H1 (cell line): ENCODE measurements at regions of chr7 and their contacts with region 1.

Region 1: GRCh38 chr7:100632951-100633717 is 8.2 kb downstream of the TFR2 start:
- DNase-seq: peak in 1 of 2 experiments; percentile 84
- H3K4me3 ChIP-seq: peak overlapping the region; percentile 60 to 89 (median 61)
- H3K27ac ChIP-seq: no peak overlapping the region
- H3K4me1 ChIP-seq: peaks cover 0 to 3% (median 3%) of the 10 kb centered on the region in 4 experiments; a peak in 5 of 7 replicates
- H3K27me3 ChIP-seq: peaks cover 0 to 16% (median 9%) of the 10 kb centered on the region in 4 experiments; a peak in 5 of 7 replicates
- CTCF ChIP-seq: peak; percentile 45 to 71 (median 63)
- EP300 ChIP-seq: no peak
- POLR2A ChIP-seq: no peak
- RAD21 ChIP-seq: peak; percentile 22 to 32; a peak in 2 of 4 replicates

Region 2: DNA sequence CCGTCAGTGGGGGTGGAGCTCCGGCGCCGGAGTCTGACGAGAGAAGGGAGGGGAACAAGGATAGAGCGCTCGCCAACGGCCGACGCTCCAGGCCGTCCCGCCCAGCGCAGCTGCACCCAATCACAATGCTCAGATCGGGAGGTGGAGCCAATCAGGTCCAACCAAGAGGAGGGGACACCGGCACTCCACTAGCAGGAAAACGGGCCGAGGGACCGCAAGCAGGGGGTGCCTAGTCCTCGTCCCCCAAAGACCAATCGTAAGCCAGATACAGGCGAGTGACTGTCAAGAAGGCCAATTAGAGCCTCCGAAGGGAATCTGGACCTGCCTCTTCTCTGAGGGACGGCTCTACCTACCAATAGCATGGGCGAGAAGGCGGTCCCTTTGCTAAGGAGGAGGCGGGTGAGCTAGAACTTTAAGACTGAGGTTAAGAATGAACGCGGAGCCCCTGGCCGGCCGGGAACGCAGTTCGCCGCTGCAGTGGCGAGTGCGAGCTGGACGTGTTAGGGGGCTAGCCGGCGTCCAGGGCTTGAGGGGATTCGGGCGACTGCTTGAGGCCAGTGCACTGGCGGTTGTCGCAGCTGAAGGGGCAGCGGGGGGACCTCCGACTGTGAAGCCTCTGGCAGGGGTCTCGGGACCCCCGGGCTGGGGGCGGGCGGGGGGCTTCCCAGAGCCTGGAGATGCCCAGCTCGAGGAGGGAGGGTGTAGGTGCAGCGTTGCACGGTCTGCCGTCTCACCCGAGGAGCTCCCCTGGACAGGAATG is 46.7 kb before region 1 on chr7 and contains the start of gene FBXO24:
- CTCF ChIA-PET with region 1: interaction called, 23 read pairs
- POLR2A ChIA-PET with region 1: interaction called, 11 read pairs
- DNase-seq: peak; percentile 99 to 100
- H3K4me3 ChIP-seq: peak within 1 kb of the TSS; percentile 80 to 88 (median 80)
- H3K27ac ChIP-seq: peak within 1 kb of the TSS; percentile 86
- H3K4me1 ChIP-seq: peaks cover 0 to 36% (median 20%) of the 10 kb centered on the region in 4 experiments; a peak in 6 of 7 replicates
- H3K27me3 ChIP-seq: peaks cover 0 to 2% (median under 1%) of the 10 kb centered on the region in 4 experiments; a peak in 3 of 7 replicates
- CTCF ChIP-seq: 0 out of 4 replicates have a peak, but pooled peaks of 1 of the 3 experiments have one; percentile 0
- EP300 ChIP-seq: no peak
- POLR2A ChIP-seq: peak in 1 of 2 experiments; percentile 47; a peak in 2 of 3 replicates
- RAD21 ChIP-seq: 0 out of 4 replicates have a peak, but pooled peaks of 1 of the 2 experiments have one; percentile 4
- total RNA-seq, gene FBXO24: 0.35 and 0.59 TPM in 2 replicates

Region 3: DNA sequence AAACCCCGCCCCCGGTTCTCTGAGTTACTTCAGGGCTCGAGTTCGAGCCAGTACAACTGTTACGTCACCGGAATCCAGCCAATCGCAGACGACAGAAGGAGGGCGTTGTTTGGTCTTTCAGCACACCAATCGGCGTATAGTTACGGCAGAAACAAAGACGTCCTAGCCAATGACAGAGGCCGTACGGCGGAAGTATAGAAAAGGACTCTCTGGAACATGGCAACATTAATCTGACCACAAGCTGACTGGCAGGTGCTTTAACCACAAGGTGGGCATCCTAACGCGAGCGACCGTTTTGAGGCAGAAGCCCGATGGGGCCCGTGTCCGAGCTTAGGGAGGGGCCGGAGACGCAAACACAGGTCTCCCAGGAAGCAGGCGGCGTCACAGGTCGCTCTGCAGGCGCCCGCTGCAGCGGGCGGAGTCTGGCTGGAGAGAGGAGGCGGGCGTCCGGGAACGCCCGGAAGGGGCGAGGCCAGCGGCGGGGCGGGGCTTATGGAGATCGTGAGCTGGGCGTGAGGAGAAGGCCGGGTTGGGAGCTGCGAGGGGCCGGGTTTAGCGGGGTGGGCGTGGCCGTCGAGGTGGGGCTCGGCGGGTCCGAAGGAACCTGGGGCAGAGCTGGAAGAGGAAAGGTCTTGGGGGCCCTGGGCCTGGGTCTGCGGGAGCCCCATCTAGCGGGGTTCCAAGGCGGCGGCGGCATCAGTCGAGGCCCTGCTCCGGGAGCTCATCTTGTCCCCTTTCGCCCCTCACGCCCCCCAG is 21.0 kb before region 1 on chr7 and contains the start of gene MOSPD3:
- CTCF ChIA-PET with region 1: interaction called, 73 read pairs
- POLR2A ChIA-PET with region 1: interaction called, 10 read pairs
- DNase-seq: peak; percentile 98 to 99
- H3K4me3 ChIP-seq: peak within 1 kb of the TSS; percentile 74 to 83 (median 76)
- H3K27ac ChIP-seq: peak within 1 kb of the TSS; percentile 98
- H3K4me1 ChIP-seq: peaks cover 0 to 6% (median 2%) of the 10 kb centered on the region in 4 experiments; a peak in 3 of 7 replicates
- H3K27me3 ChIP-seq: no peaks in the 10 kb centered on the region; a peak in 1 of 7 replicates
- CTCF ChIP-seq: no peak
- EP300 ChIP-seq: no peak
- POLR2A ChIP-seq: peak in 1 of 2 experiments; percentile 93; a peak in 2 of 3 replicates
- RAD21 ChIP-seq: no peak
- total RNA-seq, gene MOSPD3: 19.3 and 20.7 TPM in 2 replicates

Region 4: DNA sequence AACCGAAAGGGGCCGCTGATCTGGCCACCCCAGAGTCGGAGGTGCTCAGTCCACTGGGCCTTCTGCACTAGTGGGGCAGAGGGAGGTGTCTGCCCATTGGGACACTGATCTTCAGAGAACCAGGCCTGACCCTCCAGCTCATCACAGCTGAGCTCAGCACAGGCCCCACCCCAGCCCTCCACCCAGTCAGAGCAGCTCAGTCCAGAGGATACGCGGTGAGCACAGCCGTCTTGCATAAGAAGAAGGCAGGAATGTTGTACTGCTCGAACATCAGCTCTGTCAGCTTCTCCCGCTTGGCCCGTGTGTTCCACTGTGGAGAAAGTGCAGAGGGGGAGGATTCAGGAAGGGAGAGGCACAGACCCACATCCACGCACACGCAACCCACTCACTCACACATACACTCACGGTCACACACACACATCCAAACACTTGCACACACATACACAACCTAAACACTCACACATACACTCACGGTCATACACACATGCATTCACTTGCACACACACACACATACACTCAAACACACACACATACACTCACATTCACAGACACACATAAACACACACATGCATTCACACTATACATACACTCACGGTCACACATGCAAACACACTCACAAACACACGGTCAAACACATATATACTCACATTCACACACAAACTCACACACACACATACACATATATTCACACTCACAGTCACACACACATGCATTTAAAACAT is 16.9 kb after region 1 on chr7:
- CTCF ChIA-PET with region 1: interaction called, 46 read pairs
- POLR2A ChIA-PET with region 1: interaction called, 7 read pairs
- DNase-seq: no peak
- H3K4me3 ChIP-seq: no peak overlapping the region
- H3K27ac ChIP-seq: no peak overlapping the region
- H3K4me1 ChIP-seq: peaks cover 0 to 16% (median 5%) of the 10 kb centered on the region in 4 experiments; a peak in 4 of 7 replicates
- H3K27me3 ChIP-seq: peaks cover 1 to 11% (median 5%) of the 10 kb centered on the region in 4 experiments
- CTCF ChIP-seq: no peak
- EP300 ChIP-seq: no peak
- POLR2A ChIP-seq: no peak
- RAD21 ChIP-seq: no peak

Region 5: DNA sequence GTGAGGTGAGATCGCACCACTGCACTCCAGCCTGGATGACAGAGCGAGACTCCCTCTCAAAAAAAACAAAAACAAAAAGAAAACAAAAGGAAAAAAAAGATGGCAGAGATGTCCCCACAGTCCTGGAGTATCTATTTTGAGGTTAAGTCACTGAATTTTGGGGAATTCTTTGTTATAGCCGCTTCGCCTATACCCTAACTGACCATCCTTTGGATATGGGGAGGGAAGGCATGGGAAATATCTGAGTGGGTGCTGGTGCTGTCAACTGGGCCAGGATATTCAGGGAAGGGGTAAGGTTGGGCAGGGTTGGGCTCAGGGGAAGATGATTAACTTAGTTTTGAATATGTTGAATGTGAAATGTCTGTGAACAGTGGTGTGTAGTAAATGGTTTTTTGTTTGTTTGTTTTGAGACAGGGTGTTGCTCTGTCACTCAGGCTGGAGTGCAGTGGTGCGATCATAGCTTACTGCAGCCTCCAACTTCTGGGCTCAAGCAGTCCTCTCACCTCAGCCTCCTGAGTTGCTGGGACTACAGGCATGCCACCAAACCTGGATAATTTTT is 32.1 kb after region 1 on chr7:
- CTCF ChIA-PET with region 1: interaction called, 46 read pairs
- POLR2A ChIA-PET with region 1: interaction called, 3 read pairs
- DNase-seq: no peak
- H3K4me3 ChIP-seq: no peak overlapping the region
- H3K27ac ChIP-seq: no peak overlapping the region
- H3K4me1 ChIP-seq: no peaks in the 10 kb centered on the region
- H3K27me3 ChIP-seq: no peaks in the 10 kb centered on the region
- CTCF ChIP-seq: no peak
- EP300 ChIP-seq: no peak
- POLR2A ChIP-seq: no peak
- RAD21 ChIP-seq: no peak

Region 6: DNA sequence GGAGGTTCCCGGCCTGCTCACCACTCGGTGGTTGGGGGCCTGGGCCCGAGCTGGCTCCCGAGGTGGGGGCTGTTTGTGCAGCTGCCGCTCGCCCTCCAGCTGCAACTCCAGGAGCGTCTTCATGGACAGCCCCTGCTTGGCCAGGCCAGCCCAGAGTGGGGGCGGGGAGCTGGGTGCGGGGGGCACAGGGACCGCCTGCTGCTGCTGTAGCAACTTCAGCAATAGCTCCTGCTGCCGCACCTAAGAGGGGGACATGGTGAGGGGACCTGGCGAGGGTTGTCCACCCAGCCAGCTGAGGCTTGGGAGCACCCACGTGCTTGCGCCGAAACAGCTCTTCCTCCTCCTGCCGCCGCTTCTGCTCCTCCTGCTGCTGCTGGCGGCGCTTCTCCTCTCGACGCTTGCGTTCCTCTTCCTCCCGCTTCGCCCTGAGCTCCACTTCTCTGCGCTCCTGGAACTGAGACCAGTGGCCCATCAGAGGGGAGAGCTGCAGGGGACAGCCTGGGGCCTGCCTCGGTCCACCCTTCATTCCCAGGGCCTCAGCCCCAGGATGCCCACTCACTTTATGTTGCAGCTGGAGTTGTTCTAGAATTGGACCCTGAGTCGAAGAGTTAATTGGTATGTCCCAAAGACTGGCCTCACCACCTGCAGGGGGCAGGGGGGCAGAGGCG is 50.0 kb after region 1 on chr7:
- CTCF ChIA-PET with region 1: interaction called, 12 read pairs
- POLR2A ChIA-PET with region 1: interaction called, 20 read pairs
- DNase-seq: no peak
- H3K4me3 ChIP-seq: no peak overlapping the region
- H3K27ac ChIP-seq: no peak overlapping the region
- H3K4me1 ChIP-seq: peaks cover 0 to 7% (median 2%) of the 10 kb centered on the region in 4 experiments; a peak in 5 of 7 replicates
- H3K27me3 ChIP-seq: no peaks in the 10 kb centered on the region
- CTCF ChIP-seq: no peak
- EP300 ChIP-seq: no peak
- POLR2A ChIP-seq: no peak
- RAD21 ChIP-seq: no peak

Region 7: GRCh38 chr7:100705753-100706671 is 72.9 kb after region 1 on chr7 and contains the start of gene POP7:
- CTCF ChIA-PET with region 1: interaction called, 12 read pairs
- POLR2A ChIA-PET with region 1: no interaction called
- DNase-seq: peak; percentile 94 to 99
- H3K4me3 ChIP-seq: peak within 1 kb of the TSS; percentile 83 to 94 (median 90)
- H3K27ac ChIP-seq: peak within 1 kb of the TSS; percentile 86
- H3K4me1 ChIP-seq: peaks cover 0 to 11% (median 2%) of the 10 kb centered on the region in 4 experiments; a peak in 3 of 7 replicates
- H3K27me3 ChIP-seq: no peaks in the 10 kb centered on the region
- CTCF ChIP-seq: no peak
- EP300 ChIP-seq: peak in 1 of 2 experiments; percentile 54; a peak in 1 of 3 replicates
- POLR2A ChIP-seq: peak; percentile 79 to 81
- RAD21 ChIP-seq: no peak
- total RNA-seq, gene POP7: 92.5 and 96.7 TPM in 2 replicates